ENCODE measurements at regions of chr9 and their contacts with region 1.

Region 1: GRCh38 chr9:136991993-136992818 is at the start of gene PAXX:
- DNase-seq: peak; percentile 85 to 88
- ATAC-seq: peak; percentile 90 to 94
- H3K4me3 ChIP-seq: peak within 1 kb of the TSS; percentile 65 to 95 (median 82)
- H3K27ac ChIP-seq: peak within 1 kb of the TSS; percentile 58 to 86 (median 80)
- H3K4me1 ChIP-seq: peaks cover 6 to 12% of the 10 kb centered on the region in 2 donors
- H3K27me3 ChIP-seq: peaks cover 14 to 19% (median 18%) of the 10 kb centered on the region in 3 donors
- CTCF ChIP-seq: no peak
- POLR2A ChIP-seq: peak in 1 of 2 donors; percentile 40
- total RNA-seq, gene PAXX: 10.8 to 15.6 (median 14.6) TPM

Region 2: DNA sequence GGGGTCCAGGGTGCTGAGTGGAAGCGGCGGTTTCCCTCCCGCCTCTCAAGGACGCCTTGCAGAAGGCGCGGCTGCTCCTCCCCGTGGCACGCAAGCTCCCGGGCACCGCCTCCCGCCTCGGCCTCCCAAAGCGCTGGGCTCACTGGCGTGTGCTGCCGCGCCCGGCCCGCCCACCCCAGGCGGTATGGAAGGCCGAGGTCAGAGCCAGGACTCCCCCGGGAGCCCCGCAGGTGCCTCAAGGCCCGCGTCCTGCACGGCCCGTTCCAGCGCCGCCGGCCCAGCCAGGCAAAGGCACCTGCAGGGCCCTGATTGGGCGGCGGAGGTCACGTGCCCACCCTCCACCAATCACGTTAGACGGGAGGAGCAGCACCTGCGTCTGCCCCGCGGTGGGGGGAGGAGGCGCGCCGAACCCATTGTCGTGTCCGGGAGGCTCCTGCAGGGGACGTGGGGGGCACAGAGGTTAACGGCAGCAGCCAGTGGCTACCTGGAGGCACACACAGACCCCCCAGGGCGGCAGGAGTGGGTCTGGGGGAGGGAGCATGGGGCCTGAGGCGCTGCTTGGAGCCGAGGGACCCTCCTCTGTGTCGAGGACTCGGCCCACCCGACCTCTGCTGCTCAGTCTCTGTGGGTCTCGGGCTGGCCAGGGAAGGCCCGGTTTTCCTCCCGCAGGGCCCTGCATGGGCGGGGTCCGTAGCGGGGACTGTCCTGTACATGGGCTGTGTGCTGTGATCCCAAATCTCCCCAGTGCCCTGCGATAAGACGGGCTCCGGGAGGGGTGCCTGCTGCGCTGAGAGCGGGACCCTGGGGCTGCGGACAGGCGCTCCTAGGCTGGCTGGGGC is 42.2 kb before region 1 on chr9:
- in situ Hi-C with region 1: no loop called
- intact Hi-C with region 1: loop called (anchors 2 kb)
- DNase-seq: peak; percentile 92 to 96
- ATAC-seq: peak; percentile 89 to 91
- H3K4me3 ChIP-seq: peak overlapping the region; percentile 67 to 82 (median 79)
- H3K27ac ChIP-seq: peak overlapping the region; percentile 85 to 91 (median 87)
- H3K4me1 ChIP-seq: peaks cover 6 to 26% of the 10 kb centered on the region in 2 donors
- H3K27me3 ChIP-seq: no peaks in the 10 kb centered on the region
- CTCF ChIP-seq: peak in 3 of 5 experiments; percentile 37 to 51 (median 37)
- POLR2A ChIP-seq: peak; percentile 84 to 85

Region 3: DNA sequence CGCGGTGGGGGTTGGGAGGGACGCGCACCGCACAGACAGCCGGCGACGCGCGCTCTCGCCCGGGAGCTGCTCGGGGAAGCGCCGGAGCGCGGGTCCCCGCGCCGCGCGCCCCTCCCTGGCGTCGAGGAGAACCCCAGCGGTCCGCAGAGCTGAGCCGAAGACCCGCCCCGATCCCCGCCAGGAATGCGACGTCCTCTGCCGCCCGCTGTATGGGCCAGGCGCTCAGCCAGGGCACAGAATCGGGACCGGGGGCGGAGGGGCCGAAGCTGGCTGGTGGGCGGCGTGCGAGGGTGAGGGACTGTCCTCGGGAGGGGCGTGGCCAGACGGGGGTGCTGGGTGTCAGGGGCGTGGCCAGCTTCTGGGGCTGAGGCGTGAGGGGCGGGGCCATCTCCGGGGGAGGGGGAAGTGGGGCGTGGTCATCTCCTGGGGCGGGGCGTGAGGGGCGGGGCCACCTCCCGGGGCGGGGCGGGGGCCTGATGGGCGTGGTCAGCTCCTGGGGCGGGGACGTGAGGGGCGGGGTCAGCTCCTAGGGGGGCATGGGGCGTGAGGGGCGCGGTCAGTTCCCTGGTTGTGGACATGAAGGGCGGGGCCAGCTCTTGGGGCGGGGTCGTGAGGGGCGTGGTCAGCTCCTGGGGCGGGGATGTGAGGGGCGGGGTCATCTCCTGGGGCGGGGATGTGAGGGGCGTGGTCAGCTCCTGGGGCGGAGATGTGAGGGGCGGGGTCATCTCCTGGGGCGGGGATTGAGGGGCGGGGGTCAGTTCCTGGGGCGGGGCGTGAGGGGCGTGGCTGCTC is 13.9 kb before region 1 on chr9:
- in situ Hi-C with region 1: no loop called
- intact Hi-C with region 1: loop called (anchors 1 kb)
- DNase-seq: peak; percentile 33 to 57
- ATAC-seq: peak; percentile 29 to 45
- H3K4me3 ChIP-seq: peak overlapping the region; percentile 46 to 67 (median 55)
- H3K27ac ChIP-seq: peak overlapping the region; percentile 4 to 60 (median 31)
- H3K4me1 ChIP-seq: peaks cover 0 to 8% of the 10 kb centered on the region in 2 donors
- H3K27me3 ChIP-seq: peaks cover 0 to 11% (median 9%) of the 10 kb centered on the region in 3 donors
- CTCF ChIP-seq: no peak
- POLR2A ChIP-seq: no peak